ENCODE measurements at regions of chr2 and their contacts with region 1.

Region 1: GRCh38 chr2:37506407-37507050 is 162.1 kb downstream of the QPCT start:
- DNase-seq: no peak
- ATAC-seq: no peak
- H3K4me3 ChIP-seq: no peak overlapping the region
- H3K27ac ChIP-seq: no peak overlapping the region
- H3K4me1 ChIP-seq: no peaks in the 10 kb centered on the region
- H3K27me3 ChIP-seq: no peaks in the 10 kb centered on the region
- CTCF ChIP-seq: no peak

Region 2: DNA sequence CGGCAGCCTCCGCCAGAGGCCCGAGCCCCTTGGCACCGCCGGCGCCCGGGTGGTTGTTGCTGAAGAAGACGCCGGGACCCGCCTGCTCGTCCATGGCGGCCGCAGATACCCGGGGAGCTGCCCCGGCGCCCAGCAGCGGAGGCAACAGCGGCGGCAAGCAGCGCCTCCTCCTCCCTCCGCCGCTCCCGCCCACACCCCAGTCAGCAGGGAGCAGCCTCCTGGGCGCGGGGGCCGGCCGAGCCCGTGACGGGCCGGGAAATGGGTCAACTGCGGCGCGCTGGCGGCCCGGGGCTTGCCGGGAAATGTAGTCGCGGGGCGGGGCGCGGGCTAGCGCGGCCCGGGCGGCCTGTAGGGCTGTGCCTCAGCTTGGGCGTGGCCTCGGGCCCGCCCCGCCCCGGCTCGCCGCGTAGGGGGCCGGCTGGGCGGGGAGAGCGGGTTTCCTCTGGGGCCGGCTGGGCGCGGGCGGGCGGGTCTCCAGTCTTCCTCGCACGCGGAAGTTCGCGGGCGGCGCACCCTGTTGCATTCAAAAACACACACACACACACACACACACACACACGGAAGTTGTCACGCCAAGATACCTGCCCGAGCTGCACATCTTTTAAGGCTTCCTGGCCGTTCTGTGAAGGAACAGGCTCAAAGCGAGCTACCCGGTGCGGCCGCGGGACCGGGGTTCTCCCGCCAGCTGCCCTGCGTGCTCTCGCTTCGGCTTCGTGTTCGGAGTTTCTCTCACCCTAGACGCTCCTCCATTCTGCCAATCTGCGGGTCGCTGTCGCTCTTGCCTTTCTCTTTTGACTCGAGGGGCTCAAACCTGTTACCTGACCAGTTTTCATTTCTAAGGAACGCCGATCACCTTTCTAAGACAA is 539.9 kb before region 1 on chr2 and contains the start of gene STRN:
- CTCF ChIA-PET with region 1: no interaction called
- POLR2A ChIA-PET with region 1: interaction called, 12 read pairs
- intact Hi-C with region 1: no loop called
- DNase-seq: peak; percentile 97
- ATAC-seq: peak; percentile 92
- H3K4me3 ChIP-seq: peak within 1 kb of the TSS; percentile 98
- H3K27ac ChIP-seq: peak within 1 kb of the TSS; percentile 46
- H3K4me1 ChIP-seq: peaks cover 37% of the 10 kb centered on the region
- H3K27me3 ChIP-seq: no peaks in the 10 kb centered on the region
- CTCF ChIP-seq: no peak
- total RNA-seq, gene STRN: 12.9 and 18.9 TPM in 2 replicates

Region 3: DNA sequence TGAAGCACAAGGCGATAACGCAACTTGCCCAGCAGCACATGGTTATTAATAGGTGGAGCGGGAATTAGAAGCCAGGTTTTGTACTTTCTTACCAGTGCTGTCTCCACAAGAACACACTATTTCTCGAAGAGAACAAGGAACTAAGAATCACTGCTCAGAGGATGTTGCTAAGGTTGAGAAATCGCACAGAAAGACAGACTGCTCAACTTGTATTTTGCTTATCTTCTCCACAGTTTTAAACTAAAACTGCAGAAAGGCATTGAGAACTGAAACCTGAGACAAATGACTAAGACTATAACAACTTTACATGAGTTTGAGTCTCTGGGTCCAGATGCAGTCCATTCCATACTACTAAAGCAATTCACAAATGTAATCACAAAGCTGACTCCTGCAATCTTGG is 188.1 kb before region 1 on chr2:
- CTCF ChIA-PET with region 1: no interaction called
- POLR2A ChIA-PET with region 1: interaction called, 11 read pairs
- intact Hi-C with region 1: no loop called
- DNase-seq: no peak
- ATAC-seq: peak; percentile 55; the same call in 1 of the 2 replicates
- H3K4me3 ChIP-seq: no peak overlapping the region
- H3K27ac ChIP-seq: no peak overlapping the region
- H3K4me1 ChIP-seq: peaks cover 10% of the 10 kb centered on the region; the same call in 1 of the 2 replicates
- H3K27me3 ChIP-seq: no peaks in the 10 kb centered on the region
- CTCF ChIP-seq: no peak

Region 4: GRCh38 chr2:37676274-37676673 is 169.7 kb after region 1 on chr2:
- CTCF ChIA-PET with region 1: no interaction called
- POLR2A ChIA-PET with region 1: no interaction called
- intact Hi-C with region 1: no loop called
- DNase-seq: peak; percentile 88
- ATAC-seq: peak; percentile 54
- H3K4me3 ChIP-seq: no peak overlapping the region
- H3K27ac ChIP-seq: peak overlapping the region; percentile 50
- H3K4me1 ChIP-seq: peaks cover 22% of the 10 kb centered on the region
- H3K27me3 ChIP-seq: no peaks in the 10 kb centered on the region
- CTCF ChIP-seq: no peak

Region 5: DNA sequence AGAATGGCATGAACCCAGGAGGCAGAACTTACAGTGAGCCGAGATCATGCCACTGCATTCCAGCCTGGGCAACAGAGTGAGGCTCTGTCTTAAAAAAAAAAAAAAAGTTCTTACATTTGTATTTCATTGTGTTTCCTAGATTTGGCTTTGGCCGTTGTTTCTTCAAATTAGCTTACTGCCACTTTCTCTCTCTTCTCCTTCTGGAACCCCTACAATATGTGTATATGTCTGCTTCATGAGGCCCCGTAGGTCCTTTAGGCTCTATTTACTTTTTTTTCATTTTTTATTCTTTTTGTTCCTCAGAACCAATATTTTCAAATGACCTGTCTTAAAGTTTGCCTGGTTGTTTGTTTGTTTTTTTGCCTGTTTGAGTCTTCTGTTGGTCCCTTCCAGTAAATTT is 459.8 kb after region 1 on chr2:
- CTCF ChIA-PET with region 1: no interaction called
- POLR2A ChIA-PET with region 1: no interaction called
- intact Hi-C with region 1: no loop called
- DNase-seq: no peak
- ATAC-seq: no peak
- H3K4me3 ChIP-seq: no peak overlapping the region
- H3K27ac ChIP-seq: no peak overlapping the region
- H3K4me1 ChIP-seq: no peaks in the 10 kb centered on the region
- H3K27me3 ChIP-seq: no peaks in the 10 kb centered on the region
- CTCF ChIP-seq: no peak